ENCODE measurements at regions of chr2 and their contacts with region 1.

Region 1: DNA sequence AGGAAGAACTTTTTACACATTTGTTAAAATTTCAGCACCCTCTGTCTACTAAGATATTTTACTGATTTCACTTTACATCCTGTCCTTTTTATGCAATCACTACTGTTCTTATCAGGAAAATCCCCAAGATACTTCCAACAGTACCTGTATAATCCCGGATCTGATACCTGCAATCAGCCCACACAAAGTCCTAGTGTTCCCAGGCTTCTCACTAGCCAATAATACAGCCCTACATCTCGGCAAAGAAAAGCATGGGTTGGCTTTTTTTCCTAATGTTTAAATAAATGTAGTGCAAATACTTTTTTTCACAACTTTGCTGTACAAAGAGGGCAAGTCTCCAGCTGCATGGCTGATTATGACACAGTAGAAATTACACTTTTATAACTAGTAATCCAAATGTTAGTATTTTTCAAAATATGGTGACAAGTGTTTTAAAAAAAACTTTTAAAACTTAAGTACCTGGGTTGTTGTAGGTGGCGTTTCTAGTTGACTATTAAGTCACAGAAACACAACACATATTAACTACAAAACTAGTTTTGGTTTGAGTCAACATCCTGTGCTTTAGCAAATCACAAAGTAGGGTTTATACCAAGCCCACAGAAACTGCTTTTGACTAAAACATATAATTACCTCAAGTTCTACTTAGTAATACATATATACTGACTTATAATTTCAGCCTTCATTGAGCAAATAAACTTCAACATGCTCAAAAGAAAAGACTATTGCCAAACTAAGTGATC is 19.5 kb downstream of the CNOT11 start:
- DNase-seq: peak; percentile 69
- H3K4me3 Mint-ChIP-seq: peak overlapping the region; percentile 55
- H3K27ac Mint-ChIP-seq: peak overlapping the region; percentile 83
- H3K4me1 Mint-ChIP-seq: peaks cover 35% of the 10 kb centered on the region
- H3K27me3 Mint-ChIP-seq: no peaks in the 10 kb centered on the region

Region 2: GRCh38 chr2:100893392-100894089 is 378.7 kb before region 1 on chr2:
- intact Hi-C with region 1: no loop called
- DNase-seq: no peak
- H3K4me3 Mint-ChIP-seq: no peak overlapping the region
- H3K27ac Mint-ChIP-seq: no peak overlapping the region
- H3K4me1 Mint-ChIP-seq: no peaks in the 10 kb centered on the region
- H3K27me3 Mint-ChIP-seq: no peaks in the 10 kb centered on the region

Region 3: GRCh38 chr2:101012706-101013181 is 259.5 kb before region 1 on chr2:
- intact Hi-C with region 1: loop called (anchors 5 kb)
- DNase-seq: peak; percentile 84
- H3K4me3 Mint-ChIP-seq: no peak overlapping the region
- H3K27ac Mint-ChIP-seq: peak overlapping the region; percentile 64
- H3K4me1 Mint-ChIP-seq: peaks cover 22% of the 10 kb centered on the region
- H3K27me3 Mint-ChIP-seq: no peaks in the 10 kb centered on the region

Measured in activated CD4-positive, alpha-beta T cell treated with anti-CD3 and anti-CD28 coated beads, Interleukin-2, amount 10 ng/mL, durations not matched to agents 24 days and 14 days (primary cell).